CD8-positive, alpha-beta T cell (primary cell): ENCODE measurements at regions of chr3 and their contacts with region 1.

Region 1: DNA sequence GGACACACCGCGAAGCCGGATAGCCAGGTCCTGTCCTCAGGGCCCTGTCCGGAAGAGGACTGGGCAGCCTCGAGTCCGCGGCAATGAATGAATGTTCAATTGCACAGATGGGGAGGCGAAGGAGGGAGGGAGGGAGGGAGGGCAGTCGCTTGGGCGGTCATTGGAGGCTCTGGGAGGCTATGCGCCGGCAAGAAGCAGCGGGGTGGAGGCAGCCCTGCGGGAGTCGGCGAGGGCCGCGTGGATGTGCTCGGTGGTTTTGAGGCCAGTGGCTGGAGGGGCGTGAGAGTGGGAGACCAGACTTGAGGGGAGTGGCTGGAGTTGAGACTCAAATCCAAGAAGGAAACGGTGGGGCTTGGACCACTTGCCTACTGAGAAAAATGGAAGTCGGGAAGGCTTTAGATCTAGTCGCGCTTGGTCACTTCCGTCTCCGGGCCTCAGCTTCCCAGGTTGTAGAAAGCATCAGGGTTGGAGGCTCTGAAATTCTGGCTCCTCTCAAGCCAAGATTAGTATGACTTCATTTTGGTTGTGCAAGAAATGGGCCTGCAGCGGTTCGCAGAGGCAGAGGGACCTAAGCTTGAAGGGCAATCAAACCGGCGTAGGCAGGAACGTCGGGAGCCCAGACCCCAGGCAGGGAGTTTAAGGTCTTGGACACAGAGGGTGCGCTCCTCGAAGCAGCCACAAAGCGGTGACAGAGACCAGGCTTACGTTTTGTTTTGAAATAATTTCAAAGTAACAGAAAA is 21.1 kb upstream of the PLXND1 start:
- DNase-seq: peak; percentile 34 to 80 (median 66)
- ATAC-seq: peak; percentile 82
- H3K4me3 ChIP-seq: peak overlapping the region; percentile 60 to 67
- H3K4me3 Mint-ChIP-seq: peak overlapping the region; percentile 88
- H3K27ac ChIP-seq: peak overlapping the region; percentile 44
- H3K27ac Mint-ChIP-seq: peak overlapping the region; percentile 72
- H3K4me1 ChIP-seq: peaks cover 13% of the 10 kb centered on the region
- H3K4me1 Mint-ChIP-seq: peaks cover 18% of the 10 kb centered on the region
- H3K27me3 ChIP-seq: no peaks in the 10 kb centered on the region
- H3K27me3 Mint-ChIP-seq: no peaks in the 10 kb centered on the region
- CTCF ChIP-seq: peak; percentile 74

Region 2: DNA sequence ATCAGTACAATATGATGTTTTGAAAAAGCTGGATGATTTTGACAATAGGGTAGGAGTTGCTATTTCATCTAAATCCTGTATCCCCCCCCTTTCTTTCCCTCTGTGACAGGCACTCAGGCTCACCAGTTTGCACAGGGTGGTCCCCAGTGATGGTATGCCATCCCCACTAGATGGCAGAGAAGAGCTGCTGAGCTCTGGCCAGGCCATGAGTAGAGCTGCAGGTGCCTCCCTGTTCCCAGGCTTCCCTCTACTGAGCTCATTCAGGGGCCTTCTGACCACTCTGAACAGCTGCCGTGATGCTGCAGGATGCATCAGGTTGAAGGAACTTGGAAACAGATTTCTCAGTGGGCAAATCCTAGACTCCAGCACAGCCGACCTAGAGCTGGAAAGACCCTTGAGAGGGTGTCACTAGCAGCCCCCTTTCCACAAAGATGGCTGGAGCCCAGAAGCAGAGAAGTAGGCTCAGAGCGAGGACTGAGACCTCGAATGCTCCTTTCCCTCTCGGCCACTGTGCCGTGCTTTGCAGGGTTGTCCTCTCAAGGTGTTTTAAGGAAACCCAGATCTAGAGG is 244.2 kb before region 1 on chr3:
- CTCF ChIA-PET with region 1: interaction called, 3 read pairs
- POLR2A ChIA-PET with region 1: no interaction called
- intact Hi-C with region 1: loop called in 1 of 2 experiments (anchors 5 kb)
- DNase-seq: peak; percentile 18 to 66 (median 49)
- ATAC-seq: peak; percentile 97
- H3K4me3 ChIP-seq: no peak overlapping the region
- H3K4me3 Mint-ChIP-seq: no peak overlapping the region
- H3K27ac ChIP-seq: no peak overlapping the region
- H3K27ac Mint-ChIP-seq: no peak overlapping the region
- H3K4me1 ChIP-seq: no peaks in the 10 kb centered on the region
- H3K4me1 Mint-ChIP-seq: no peaks in the 10 kb centered on the region
- H3K27me3 ChIP-seq: no peaks in the 10 kb centered on the region
- H3K27me3 Mint-ChIP-seq: no peaks in the 10 kb centered on the region
- CTCF ChIP-seq: peak; percentile 62

Region 3: DNA sequence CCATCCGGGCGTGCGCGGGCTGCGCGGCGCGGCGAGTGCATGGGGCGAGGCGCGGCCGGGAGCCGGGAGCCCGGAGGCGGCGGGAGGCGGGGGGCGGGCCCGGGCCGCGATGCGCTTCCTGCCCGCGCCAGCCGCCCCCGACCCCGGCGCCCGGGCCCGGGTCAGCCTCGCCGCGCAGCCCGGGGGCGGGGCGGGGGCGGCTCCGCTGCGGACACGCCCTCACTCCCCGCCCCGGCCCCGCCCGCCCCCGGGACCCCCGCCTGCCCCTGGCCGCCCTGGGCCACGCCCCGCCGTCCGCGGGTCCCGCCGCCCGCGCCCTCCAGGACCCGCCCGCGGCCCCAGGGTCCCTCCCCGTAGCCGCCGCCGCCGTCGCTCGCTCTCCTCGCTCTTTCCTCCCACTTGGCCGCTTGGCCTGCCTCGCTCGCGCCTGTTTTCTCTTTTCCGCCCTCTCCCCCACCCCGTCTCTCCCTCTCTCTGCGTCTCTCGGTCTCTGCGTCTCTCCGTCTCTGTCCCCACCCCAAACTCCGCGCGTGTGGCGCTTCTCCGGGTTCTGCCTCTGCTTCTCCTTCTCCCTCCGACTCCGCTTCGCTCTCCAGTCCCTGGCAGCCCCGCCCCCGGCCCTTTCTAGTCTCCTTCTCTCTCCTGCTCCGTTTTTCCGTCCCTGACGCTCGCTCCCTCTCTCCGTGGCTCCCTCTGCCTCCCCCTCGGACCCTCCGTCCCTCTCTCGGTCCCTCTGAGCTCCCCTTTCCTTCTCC is 20.8 kb before region 1 on chr3 and contains the start of gene PLXND1:
- CTCF ChIA-PET with region 1: interaction called, 10 read pairs
- POLR2A ChIA-PET with region 1: no interaction called
- intact Hi-C with region 1: loop called in 1 of 2 experiments (anchors 2 kb)
- DNase-seq: peak in 7 of 9 experiments; percentile 22 to 77 (median 53)
- ATAC-seq: peak; percentile 66
- H3K4me3 ChIP-seq: peak within 1 kb of the TSS; percentile 49 to 59
- H3K4me3 Mint-ChIP-seq: peak within 1 kb of the TSS; percentile 96
- H3K27ac ChIP-seq: no peak within 1 kb of the TSS
- H3K27ac Mint-ChIP-seq: peak within 1 kb of the TSS; percentile 92
- H3K4me1 ChIP-seq: peaks cover 15% of the 10 kb centered on the region
- H3K4me1 Mint-ChIP-seq: peaks cover 25% of the 10 kb centered on the region
- H3K27me3 ChIP-seq: peaks cover 5 to 7% of the 10 kb centered on the region in 2 experiments
- H3K27me3 Mint-ChIP-seq: peaks cover 14% of the 10 kb centered on the region
- CTCF ChIP-seq: no peak
- total RNA-seq, gene PLXND1: 84.7 to 96.8 TPM

Region 4: GRCh38 chr3:129638481-129638880 is 10.9 kb after region 1 on chr3:
- CTCF ChIA-PET with region 1: interaction called, 10 read pairs
- POLR2A ChIA-PET with region 1: no interaction called
- intact Hi-C with region 1: no loop called
- DNase-seq: no peak
- ATAC-seq: no peak
- H3K4me3 ChIP-seq: no peak overlapping the region
- H3K4me3 Mint-ChIP-seq: no peak overlapping the region
- H3K27ac ChIP-seq: no peak overlapping the region
- H3K27ac Mint-ChIP-seq: no peak overlapping the region
- H3K4me1 ChIP-seq: no peaks in the 10 kb centered on the region
- H3K4me1 Mint-ChIP-seq: no peaks in the 10 kb centered on the region
- H3K27me3 ChIP-seq: no peaks in the 10 kb centered on the region
- H3K27me3 Mint-ChIP-seq: peaks cover 2% of the 10 kb centered on the region
- CTCF ChIP-seq: no peak

Region 5: DNA sequence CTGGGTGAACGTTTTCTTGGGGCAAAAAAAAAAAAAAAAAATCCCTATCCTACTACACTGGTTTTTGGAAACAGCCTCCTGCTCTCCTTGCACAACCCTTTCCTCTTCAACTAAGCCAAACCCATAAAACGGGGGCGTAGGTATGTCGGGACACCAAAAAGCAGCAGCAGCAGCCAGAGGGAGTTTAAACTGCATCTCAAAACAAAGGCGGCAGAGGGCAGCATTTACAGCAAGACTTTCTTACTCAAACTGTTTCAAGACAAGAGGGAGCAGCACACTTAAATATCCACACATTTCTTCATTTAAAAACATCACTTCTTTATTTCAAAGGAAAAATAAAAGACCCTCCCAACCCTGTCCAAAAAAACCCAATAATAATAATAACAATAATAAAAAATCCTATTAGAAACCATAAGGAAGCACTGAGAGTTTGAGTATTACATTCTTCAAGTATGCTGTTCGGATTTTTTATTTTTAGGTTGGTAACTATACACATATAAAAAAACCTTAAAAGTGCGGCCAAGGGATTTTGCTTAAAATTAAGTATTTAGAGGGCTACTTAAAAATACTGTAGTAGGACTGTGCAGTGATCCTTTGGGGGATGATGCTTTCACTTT is 22.8 kb after region 1 on chr3:
- CTCF ChIA-PET with region 1: interaction called, 13 read pairs
- POLR2A ChIA-PET with region 1: no interaction called
- intact Hi-C with region 1: loop called in 1 of 2 experiments (anchors 1 kb)
- DNase-seq: peak; percentile 14 to 68 (median 56)
- ATAC-seq: peak; percentile 46
- H3K4me3 ChIP-seq: no peak overlapping the region
- H3K4me3 Mint-ChIP-seq: no peak overlapping the region
- H3K27ac ChIP-seq: no peak overlapping the region
- H3K27ac Mint-ChIP-seq: no peak overlapping the region
- H3K4me1 ChIP-seq: no peaks in the 10 kb centered on the region
- H3K4me1 Mint-ChIP-seq: peaks cover 2% of the 10 kb centered on the region
- H3K27me3 ChIP-seq: no peaks in the 10 kb centered on the region
- H3K27me3 Mint-ChIP-seq: no peaks in the 10 kb centered on the region
- CTCF ChIP-seq: peak; percentile 65

Region 6: GRCh38 chr3:129893581-129894070 is 266.0 kb after region 1 on chr3 and contains the start of gene TMCC1:
- CTCF ChIA-PET with region 1: interaction called, 7 read pairs
- POLR2A ChIA-PET with region 1: interaction called, 3 read pairs
- intact Hi-C with region 1: loop called in 1 of 2 experiments (anchors 2 kb)
- DNase-seq: peak; percentile 72 to 96 (median 90)
- ATAC-seq: peak; percentile 94
- H3K4me3 ChIP-seq: peak within 1 kb of the TSS; percentile 91 to 97
- H3K4me3 Mint-ChIP-seq: peak within 1 kb of the TSS; percentile 90
- H3K27ac ChIP-seq: peak within 1 kb of the TSS; percentile 91 to 93
- H3K27ac Mint-ChIP-seq: peak within 1 kb of the TSS; percentile 93
- H3K4me1 ChIP-seq: peaks cover 39% of the 10 kb centered on the region
- H3K4me1 Mint-ChIP-seq: peaks cover 43% of the 10 kb centered on the region
- H3K27me3 ChIP-seq: no peaks in the 10 kb centered on the region
- H3K27me3 Mint-ChIP-seq: no peaks in the 10 kb centered on the region
- CTCF ChIP-seq: no peak
- total RNA-seq, gene TMCC1: 30.0 to 33.1 TPM

Region 7: DNA sequence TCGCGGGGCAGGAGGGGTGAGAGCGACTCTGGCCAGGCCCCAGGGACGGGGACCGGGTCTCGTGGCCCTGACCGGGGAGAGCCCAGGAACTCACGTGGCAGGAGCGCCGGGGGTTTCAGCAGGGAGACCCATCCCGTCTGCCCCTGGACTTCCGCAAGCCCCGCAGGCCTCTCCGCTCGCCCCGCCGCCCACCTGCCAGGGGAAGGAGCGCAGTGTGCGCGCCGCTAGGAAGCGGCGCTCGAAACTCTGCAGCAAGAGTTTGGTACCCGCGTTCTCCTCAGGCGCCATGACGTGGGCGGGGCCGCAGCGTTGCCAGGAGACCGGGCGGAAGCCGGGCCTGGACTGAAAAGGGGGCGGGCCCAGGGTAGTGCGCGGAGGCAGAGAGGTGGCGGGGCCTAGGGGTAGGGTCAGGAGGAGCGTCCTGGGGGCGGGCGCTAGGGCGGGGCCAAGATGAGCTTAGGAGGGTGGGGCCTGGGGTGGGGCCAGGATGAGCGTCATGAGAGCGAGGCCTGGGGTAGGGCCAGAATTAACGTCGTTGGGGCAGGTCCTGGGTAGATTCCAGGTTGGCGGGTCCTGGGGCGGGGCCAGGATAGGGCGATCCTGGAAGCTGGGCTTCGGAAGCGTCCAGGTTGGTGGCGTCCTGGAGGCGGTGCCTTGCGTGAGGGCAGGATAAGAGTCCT is 483.7 kb after region 1 on chr3:
- CTCF ChIA-PET with region 1: interaction called, 5 read pairs
- POLR2A ChIA-PET with region 1: no interaction called
- intact Hi-C with region 1: loop called (anchors 5 kb)
- DNase-seq: peak; percentile 97 to 100 (median 99)
- ATAC-seq: peak; percentile 100
- H3K4me3 ChIP-seq: peak overlapping the region; percentile 69 to 89
- H3K4me3 Mint-ChIP-seq: peak overlapping the region; percentile 99
- H3K27ac ChIP-seq: peak overlapping the region; percentile 82 to 95
- H3K27ac Mint-ChIP-seq: peak overlapping the region; percentile 100
- H3K4me1 ChIP-seq: peaks cover 3% of the 10 kb centered on the region
- H3K4me1 Mint-ChIP-seq: peaks cover 28% of the 10 kb centered on the region
- H3K27me3 ChIP-seq: no peaks in the 10 kb centered on the region
- H3K27me3 Mint-ChIP-seq: no peaks in the 10 kb centered on the region
- CTCF ChIP-seq: no peak